WTC11 (cell line): ENCODE measurements at regions of chr19 and their contacts with region 1.

Region 1: DNA sequence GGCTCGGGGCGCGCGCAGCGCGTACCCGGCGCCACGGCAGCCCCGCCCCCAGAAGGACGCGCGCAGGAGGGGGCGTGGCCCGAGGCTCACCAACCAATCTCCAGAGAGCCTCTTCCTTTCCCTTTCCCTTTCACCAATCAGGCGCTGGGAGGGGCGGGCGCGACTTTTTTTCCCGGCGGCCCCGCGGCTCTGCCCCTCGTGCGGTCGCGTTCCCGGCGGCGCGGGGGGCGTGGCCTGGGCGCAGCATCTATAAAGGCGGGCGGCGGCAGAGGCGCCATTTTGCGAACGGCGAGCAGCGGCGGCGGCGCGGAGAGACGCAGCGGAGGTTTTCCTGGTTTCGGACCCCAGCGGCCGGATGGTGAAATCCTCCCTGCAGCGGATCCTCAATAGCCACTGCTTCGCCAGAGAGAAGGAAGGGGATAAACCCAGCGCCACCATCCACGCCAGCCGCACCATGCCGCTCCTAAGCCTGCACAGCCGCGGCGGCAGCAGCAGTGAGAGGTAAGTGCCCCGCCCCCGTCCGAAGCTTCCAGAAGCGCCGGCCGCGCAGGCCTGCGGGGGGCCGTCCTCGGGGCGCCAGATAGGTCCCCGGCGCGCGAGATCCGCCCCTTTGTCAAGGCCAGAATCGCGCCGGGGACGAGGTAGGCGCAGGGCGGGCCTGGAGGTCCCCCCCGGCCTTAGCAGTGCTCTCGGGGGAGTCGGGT is 12.6 kb downstream of the PEAK3 start:
- DNase-seq: peak; percentile 99
- ATAC-seq: peak; percentile 79
- H3K4me3 Mint-ChIP-seq: peak overlapping the region; percentile 82
- H3K27ac Mint-ChIP-seq: peak overlapping the region; percentile 76; the same call in 1 of the 2 replicates
- H3K4me1 Mint-ChIP-seq: peaks cover 33% of the 10 kb centered on the region
- H3K27me3 Mint-ChIP-seq: no peaks in the 10 kb centered on the region; the same call in 1 of the 2 replicates
- CTCF ChIP-seq: no peak

Region 2: DNA sequence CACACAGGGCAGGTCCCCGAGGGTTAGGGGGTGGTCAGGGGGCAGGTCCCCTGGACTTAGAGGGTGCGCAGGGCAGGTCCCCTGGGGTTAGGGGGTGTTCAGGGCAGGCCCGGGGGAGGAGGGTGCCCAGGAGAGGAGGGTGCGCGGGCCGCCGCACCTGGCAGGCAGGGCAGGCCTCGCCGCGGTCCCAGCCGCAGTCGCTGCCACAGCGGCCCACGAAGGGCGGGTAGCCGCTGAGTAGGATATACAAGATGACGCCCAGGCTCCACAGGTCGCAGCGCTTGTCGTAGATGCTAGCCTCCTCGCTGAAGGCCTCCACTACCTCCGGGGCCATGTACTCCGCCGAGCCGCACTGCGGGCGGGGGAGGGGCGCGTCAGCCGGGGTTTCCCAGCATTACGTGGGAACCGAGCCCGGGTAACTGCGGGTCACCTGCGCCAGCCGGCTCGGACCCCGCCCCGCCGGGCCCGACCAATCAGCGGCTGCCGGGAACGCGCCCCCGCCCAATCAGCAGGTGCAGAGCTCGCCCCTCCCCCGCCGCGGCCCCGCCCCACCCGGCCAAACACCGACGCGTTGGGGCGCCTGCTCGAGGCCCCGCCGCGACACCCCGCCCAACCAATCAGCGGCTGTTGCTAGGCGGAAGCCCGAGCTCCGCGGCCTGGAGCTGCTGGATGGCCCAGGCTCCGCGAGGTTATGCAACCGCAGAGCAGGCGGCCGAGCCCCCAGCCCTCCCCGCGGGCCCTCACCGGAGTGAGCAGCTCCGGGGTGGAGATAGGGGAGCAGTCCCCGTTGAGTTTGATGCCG is 227.5 kb before region 1 on chr19:
- CTCF ChIA-PET with region 1: no interaction called
- POLR2A ChIA-PET with region 1: no interaction called
- DNase-seq: peak; percentile 99
- ATAC-seq: peak; percentile 87
- H3K4me3 Mint-ChIP-seq: peak overlapping the region; percentile 30
- H3K27ac Mint-ChIP-seq: no peak overlapping the region; the same call in 1 of the 2 replicates
- H3K4me1 Mint-ChIP-seq: peaks cover 7% of the 10 kb centered on the region; the same call in 1 of the 2 replicates
- H3K27me3 Mint-ChIP-seq: no peaks in the 10 kb centered on the region
- CTCF ChIP-seq: no peak

Region 3: GRCh38 chr19:2289714-2290435 is 20.5 kb after region 1 on chr19:
- CTCF ChIA-PET with region 1: interaction called, 20 read pairs
- POLR2A ChIA-PET with region 1: no interaction called
- DNase-seq: no peak
- ATAC-seq: no peak
- H3K4me3 Mint-ChIP-seq: peak overlapping the region; percentile 63
- H3K27ac Mint-ChIP-seq: no peak overlapping the region
- H3K4me1 Mint-ChIP-seq: peaks cover 9% of the 10 kb centered on the region; the same call in 1 of the 2 replicates
- H3K27me3 Mint-ChIP-seq: peaks cover 74% of the 10 kb centered on the region
- CTCF ChIP-seq: no peak

Region 4: GRCh38 chr19:2309734-2310362 is 40.5 kb after region 1 on chr19:
- CTCF ChIA-PET with region 1: interaction called, 3 read pairs
- POLR2A ChIA-PET with region 1: interaction called, 11 read pairs
- DNase-seq: no peak
- ATAC-seq: no peak
- H3K4me3 Mint-ChIP-seq: no peak overlapping the region
- H3K27ac Mint-ChIP-seq: no peak overlapping the region
- H3K4me1 Mint-ChIP-seq: peaks cover 4% of the 10 kb centered on the region; the same call in 1 of the 2 replicates
- H3K27me3 Mint-ChIP-seq: peaks cover 18% of the 10 kb centered on the region
- CTCF ChIP-seq: no peak